OCI-LY7 (cell line): ENCODE measurements at regions of chr11 and their contacts with region 1.

Region 1: DNA sequence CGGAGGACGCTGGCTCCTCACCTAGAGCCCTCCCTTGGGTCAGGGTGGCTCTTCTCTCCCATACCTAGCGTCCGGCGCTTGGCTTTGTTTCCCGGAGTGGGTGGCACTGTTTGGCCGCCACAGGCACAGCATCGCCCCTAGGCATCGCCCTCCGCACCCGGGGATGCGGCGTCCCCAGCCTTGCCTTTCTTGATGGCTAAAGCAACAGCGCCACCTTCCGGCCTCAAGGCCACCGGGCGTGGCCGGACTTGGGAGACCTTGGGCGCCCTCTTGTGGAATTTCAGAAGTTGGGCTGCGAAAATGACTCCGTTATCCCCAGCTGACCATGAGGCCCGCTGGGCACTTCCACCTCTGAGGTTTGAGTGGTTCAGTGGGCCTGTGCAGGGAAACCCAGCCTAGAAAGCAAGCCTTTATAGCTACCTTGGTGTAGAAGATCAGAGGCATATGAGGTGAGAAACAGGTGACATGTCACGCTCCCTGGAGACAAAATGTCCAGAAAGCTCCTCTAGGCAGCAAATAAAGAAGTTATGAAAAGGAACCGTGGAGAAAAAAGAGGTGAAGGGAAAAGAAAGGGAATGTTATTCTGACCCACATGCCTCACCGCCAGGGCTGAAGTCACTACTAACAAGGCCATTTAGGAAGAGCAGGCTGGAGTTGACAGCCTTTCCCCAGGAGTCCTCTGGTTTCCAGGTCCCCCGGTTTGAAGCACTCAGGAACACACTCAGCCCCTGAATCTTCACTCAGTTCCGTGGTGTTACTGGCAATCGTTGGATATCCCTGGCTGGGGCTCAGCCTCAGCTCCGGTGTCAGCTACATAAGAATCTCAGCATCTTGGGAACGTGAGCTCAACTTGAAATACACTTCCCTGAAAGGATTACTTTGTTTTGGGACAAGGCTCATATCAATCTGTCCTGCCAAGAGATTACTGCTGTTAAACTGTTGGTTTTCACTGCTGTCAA is 54.1 kb downstream of the SNX19 start:
- DNase-seq: peak; percentile 93
- H3K4me3 ChIP-seq: no peak overlapping the region
- H3K27ac ChIP-seq: no peak overlapping the region
- H3K4me1 ChIP-seq: no peaks in the 10 kb centered on the region
- CTCF ChIP-seq: peak; percentile 100

Region 2: DNA sequence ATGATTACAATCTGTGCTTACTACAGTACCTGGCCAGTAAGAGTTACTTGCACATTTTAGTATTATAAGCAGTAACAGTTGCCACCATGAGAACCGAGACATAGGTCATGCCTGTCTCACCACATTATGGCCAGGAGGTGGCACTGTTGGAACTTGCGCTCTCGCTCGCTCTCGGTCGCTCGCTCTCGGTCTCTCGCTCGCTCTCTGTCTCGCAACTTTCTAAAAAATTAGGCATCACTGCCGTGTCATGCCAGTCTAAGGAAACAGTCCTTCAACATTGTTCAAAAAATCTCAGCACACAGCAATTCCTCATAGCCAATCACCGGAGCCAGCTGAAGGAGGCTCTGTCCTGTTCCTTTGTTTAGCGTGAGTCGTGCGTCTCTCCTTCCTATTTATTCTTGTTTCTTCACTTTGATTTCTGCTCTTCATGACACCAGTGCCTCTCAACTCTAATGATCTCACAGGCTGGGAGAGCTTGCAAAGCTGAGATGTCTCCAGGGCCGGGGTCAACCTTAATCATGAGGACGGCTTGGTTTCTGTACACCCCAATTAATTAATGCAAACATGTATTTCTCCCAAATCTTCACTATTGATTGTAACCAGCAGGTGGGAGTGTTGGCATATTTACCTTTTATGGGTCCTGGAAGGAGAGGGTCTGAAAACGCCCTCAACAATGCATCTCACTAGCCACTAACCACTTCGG is 427.5 kb before region 1 on chr11:
- CTCF ChIA-PET with region 1: interaction called, 5 read pairs
- POLR2A ChIA-PET with region 1: no interaction called
- intact Hi-C with region 1: loop called (anchors 1 kb)
- DNase-seq: peak; percentile 84
- H3K4me3 ChIP-seq: peak overlapping the region; percentile 70
- H3K27ac ChIP-seq: no peak overlapping the region
- H3K4me1 ChIP-seq: no peaks in the 10 kb centered on the region
- CTCF ChIP-seq: peak; percentile 90

Region 3: DNA sequence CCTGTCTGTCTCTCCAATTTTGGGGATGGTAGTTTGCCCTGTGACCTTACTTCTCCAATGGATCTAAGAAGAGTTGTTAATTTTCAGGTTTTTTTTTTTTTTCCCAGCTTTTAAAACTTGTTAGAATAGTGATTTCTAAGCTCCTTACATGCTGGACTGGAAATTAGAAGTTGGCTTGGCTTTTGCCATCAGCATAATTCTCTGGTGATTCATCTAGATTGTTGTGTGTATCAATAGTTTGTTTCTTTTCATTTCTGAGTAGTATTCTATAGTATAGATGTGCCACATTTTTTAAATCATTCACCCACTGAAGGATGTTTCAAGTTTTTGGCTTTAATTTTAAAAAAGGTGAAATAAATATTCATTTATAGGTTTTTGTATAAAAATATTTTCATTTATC is 362.4 kb before region 1 on chr11:
- CTCF ChIA-PET with region 1: no interaction called
- POLR2A ChIA-PET with region 1: no interaction called
- intact Hi-C with region 1: no loop called
- DNase-seq: no peak
- H3K4me3 ChIP-seq: no peak overlapping the region
- H3K27ac ChIP-seq: no peak overlapping the region
- H3K4me1 ChIP-seq: no peaks in the 10 kb centered on the region
- CTCF ChIP-seq: no peak

Region 4: DNA sequence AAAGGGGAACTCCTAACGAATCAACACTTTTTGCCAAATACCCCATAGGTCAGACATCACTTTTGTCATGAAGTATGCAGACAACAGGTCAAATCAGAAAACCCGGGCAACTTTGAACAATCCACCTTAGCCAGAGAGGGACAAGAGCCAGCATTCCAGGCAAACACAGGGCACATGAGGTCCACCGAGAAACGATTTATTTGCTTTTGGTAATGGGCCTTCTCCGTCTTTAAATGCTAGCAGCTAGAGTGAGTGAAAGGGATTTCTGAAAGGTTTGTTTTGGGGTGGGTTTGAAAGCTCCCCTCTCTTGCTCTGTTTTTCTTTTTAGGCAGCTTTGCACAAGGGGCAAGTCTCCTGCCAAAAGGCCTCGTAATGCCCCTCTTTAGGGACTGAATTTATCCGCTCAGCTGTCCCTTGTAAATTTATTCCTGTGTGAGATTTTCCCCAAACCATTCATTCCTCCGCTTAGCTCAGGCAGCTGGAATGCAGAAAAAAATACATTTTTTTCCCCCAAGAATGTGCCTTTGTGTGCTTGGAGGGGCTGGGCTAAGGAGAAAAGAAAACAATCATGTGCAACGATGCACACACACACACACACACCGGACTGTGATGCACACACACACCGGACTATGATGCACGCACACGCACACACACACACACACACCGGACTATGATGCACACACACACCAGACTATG is 142.8 kb before region 1 on chr11:
- CTCF ChIA-PET with region 1: no interaction called
- POLR2A ChIA-PET with region 1: no interaction called
- intact Hi-C with region 1: no loop called
- DNase-seq: no peak
- H3K4me3 ChIP-seq: no peak overlapping the region
- H3K27ac ChIP-seq: no peak overlapping the region
- H3K4me1 ChIP-seq: no peaks in the 10 kb centered on the region
- CTCF ChIP-seq: no peak

Region 5: GRCh38 chr11:131157678-131158077 is 295.5 kb after region 1 on chr11:
- CTCF ChIA-PET with region 1: interaction called, 10 read pairs
- POLR2A ChIA-PET with region 1: no interaction called
- intact Hi-C with region 1: no loop called
- DNase-seq: no peak
- H3K4me3 ChIP-seq: no peak overlapping the region
- H3K27ac ChIP-seq: no peak overlapping the region
- H3K4me1 ChIP-seq: no peaks in the 10 kb centered on the region
- CTCF ChIP-seq: no peak